Calu3 (cell line): ENCODE measurements at regions of chr12 and their contacts with region 1.

Region 1: GRCh38 chr12:108495054-108495453 is 20.0 kb upstream of the FICD start:
- DNase-seq: peak; percentile 60
- H3K4me3 Mint-ChIP-seq: no peak overlapping the region
- H3K27ac Mint-ChIP-seq: no peak overlapping the region
- H3K4me1 Mint-ChIP-seq: no peaks in the 10 kb centered on the region
- H3K27me3 Mint-ChIP-seq: peaks cover 79% of the 10 kb centered on the region
- CTCF ChIP-seq: peak; percentile 74

Region 2: DNA sequence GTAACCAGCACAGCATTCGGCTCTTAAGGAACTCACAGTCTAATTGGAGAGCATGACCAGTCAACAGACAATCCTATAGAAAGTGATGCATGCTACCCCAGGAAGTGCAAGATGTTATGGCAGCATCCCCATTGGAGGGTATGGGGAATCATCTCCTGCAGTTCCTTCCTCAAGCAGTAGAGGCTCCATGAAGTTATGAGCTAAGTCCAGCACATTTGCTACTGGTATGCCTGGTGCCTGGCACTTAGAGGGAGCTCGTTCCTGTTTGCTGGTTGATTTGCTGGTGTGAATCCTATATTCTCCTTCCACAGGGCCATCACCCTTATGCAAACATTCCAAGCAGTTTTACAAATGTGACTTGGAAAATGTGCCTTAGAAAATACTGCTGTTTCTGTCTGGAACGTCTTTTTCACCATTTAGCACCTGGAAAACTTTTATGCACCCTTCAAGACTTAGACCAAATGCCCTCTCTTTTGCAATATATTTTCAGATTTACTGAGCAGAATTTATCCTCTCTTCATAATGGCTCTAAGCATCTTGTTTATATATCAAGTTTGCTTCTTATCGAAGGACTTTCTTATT is 502.1 kb before region 1 on chr12:
- CTCF ChIA-PET with region 1: interaction called, 6 read pairs
- intact Hi-C with region 1: loop called (anchors 1 kb)
- DNase-seq: peak; percentile 53
- H3K4me3 Mint-ChIP-seq: no peak overlapping the region
- H3K27ac Mint-ChIP-seq: no peak overlapping the region
- H3K4me1 Mint-ChIP-seq: no peaks in the 10 kb centered on the region
- H3K27me3 Mint-ChIP-seq: peaks cover 45% of the 10 kb centered on the region
- CTCF ChIP-seq: peak; percentile 56

Region 3: DNA sequence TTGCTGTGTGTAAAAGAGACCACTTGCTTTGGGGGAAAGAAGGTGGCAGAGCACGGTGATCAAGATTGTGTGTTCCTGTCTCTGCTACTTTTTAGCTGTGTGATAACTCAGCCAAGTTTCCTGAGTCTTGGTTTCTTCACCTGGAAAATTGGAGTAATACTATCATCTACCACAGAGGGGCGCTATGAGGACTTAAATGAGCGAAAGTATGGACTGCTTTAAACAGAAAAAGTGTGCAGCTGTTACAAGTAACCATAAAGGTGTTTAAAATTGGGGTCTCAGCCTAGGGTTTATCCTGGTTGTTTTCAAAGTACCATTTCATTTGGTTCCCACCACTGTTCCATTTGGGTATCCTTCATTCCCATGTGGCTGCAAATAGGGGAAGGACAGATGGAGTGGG is 431.9 kb before region 1 on chr12:
- CTCF ChIA-PET with region 1: interaction called, 3 read pairs
- intact Hi-C with region 1: loop called (anchors 10 kb)
- DNase-seq: no peak
- H3K4me3 Mint-ChIP-seq: no peak overlapping the region
- H3K27ac Mint-ChIP-seq: no peak overlapping the region
- H3K4me1 Mint-ChIP-seq: no peaks in the 10 kb centered on the region
- H3K27me3 Mint-ChIP-seq: peaks cover 30% of the 10 kb centered on the region
- CTCF ChIP-seq: peak; percentile 14